K562 (cell line): ENCODE measurements at regions of chr2 and their contacts with region 1.

Region 1: DNA sequence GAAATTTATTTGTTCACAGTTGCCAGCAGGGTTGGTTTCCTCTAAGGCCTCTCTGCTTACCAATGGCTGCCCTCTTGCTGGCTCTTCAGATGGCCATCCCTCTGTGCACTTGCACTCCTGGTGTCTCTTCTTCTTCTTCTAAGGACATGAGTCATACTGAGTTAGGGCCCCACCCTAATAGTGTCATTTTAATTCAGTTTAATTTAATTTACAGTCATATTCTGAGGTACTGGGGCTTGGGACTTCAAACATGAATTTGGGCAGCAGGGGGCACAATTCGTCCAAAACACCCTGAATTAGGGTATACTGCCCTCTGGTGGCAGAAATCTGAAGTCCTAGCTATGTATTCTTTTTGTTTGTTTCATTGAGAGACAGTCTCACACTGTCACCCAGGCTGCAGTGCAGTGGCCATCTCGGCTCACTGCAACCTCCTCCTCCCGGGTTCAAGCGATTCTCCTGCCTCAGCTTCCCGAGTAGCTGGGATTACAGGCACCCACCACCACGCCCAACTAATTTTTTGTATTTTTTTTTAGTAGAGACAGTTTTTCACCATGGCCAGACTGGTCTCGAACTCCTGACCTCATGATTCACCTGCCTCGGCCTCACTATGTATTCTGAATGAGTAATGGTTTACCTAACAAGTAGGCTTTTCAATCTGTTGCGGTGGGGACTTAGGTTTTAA is 19.8 kb downstream of the SLC4A1AP start:
- DNase-seq: peak; percentile 74 to 94 (median 78)
- ATAC-seq: peak; percentile 95
- H3K4me3 ChIP-seq: no peak overlapping the region
- H3K27ac ChIP-seq: no peak overlapping the region; the same call in 2 of the 3 replicates
- H3K4me1 ChIP-seq: peaks cover 0 to 2% of the 10 kb centered on the region in 2 experiments; a peak in 1 of 5 replicates
- H3K27me3 ChIP-seq: no peaks in the 10 kb centered on the region
- CTCF ChIP-seq: peak; percentile 97 to 100 (median 99)
- EP300 ChIP-seq: no peak
- POLR2A ChIP-seq: no peak
- RAD21 ChIP-seq: peak; percentile 81 to 94

Region 2: GRCh38 chr2:27303093-27304025 is 380.2 kb before region 1 on chr2:
- CTCF ChIA-PET with region 1: no interaction called
- POLR2A ChIA-PET with region 1: no interaction called
- in situ Hi-C with region 1: no loop called
- intact Hi-C with region 1: loop called (anchors 5 kb)
- DNase-seq: peak; percentile 69 to 82 (median 75)
- ATAC-seq: peak; percentile 87
- H3K4me3 ChIP-seq: peak overlapping the region; percentile 26
- H3K27ac ChIP-seq: no peak overlapping the region
- H3K4me1 ChIP-seq: peaks cover 0 to 10% of the 10 kb centered on the region in 2 experiments; a peak in 3 of 5 replicates
- H3K27me3 ChIP-seq: no peaks in the 10 kb centered on the region
- CTCF ChIP-seq: peak; percentile 80 to 93 (median 85)
- EP300 ChIP-seq: no peak
- POLR2A ChIP-seq: no peak
- RAD21 ChIP-seq: peak; percentile 80 to 85

Region 3: GRCh38 chr2:27409321-27410073 is 274.0 kb before region 1 on chr2 and contains the start of gene PPM1G:
- CTCF ChIA-PET with region 1: interaction called, 35 read pairs
- POLR2A ChIA-PET with region 1: interaction called, 4 read pairs
- in situ Hi-C with region 1: no loop called
- intact Hi-C with region 1: loop called (anchors 1 kb)
- DNase-seq: peak; percentile 93 to 97 (median 94)
- ATAC-seq: peak; percentile 98
- H3K4me3 ChIP-seq: peak within 1 kb of the TSS; percentile 99
- H3K27ac ChIP-seq: peak within 1 kb of the TSS; percentile 93
- H3K4me1 ChIP-seq: peaks cover 6 to 26% of the 10 kb centered on the region in 2 experiments; a peak in 4 of 5 replicates
- H3K27me3 ChIP-seq: no peaks in the 10 kb centered on the region
- CTCF ChIP-seq: 0 out of 6 replicates have a peak, but pooled peaks of 1 of the 3 experiments have one; percentile 7
- EP300 ChIP-seq: peak; percentile 40
- POLR2A ChIP-seq: peak; percentile 95
- RAD21 ChIP-seq: no peak
- polyA plus RNA-seq, gene PPM1G: 61.7 to 88.8 TPM

Region 4: GRCh38 chr2:27441958-27442919 is 241.3 kb before region 1 on chr2 and contains the start of gene KRTCAP3:
- CTCF ChIA-PET with region 1: no interaction called
- POLR2A ChIA-PET with region 1: no interaction called
- in situ Hi-C with region 1: no loop called
- intact Hi-C with region 1: no loop called
- DNase-seq: peak in 3 of 4 experiments; percentile 41 to 78 (median 73)
- ATAC-seq: peak; percentile 36
- H3K4me3 ChIP-seq: no peak within 1 kb of the TSS
- H3K27ac ChIP-seq: peak within 1 kb of the TSS; percentile 68
- H3K4me1 ChIP-seq: peaks cover 12 to 24% of the 10 kb centered on the region in 2 experiments; a peak in 4 of 5 replicates
- H3K27me3 ChIP-seq: no peaks in the 10 kb centered on the region
- CTCF ChIP-seq: no peak
- EP300 ChIP-seq: no peak
- POLR2A ChIP-seq: no peak; the same call in 1 of the 2 replicates
- RAD21 ChIP-seq: no peak
- polyA plus RNA-seq, gene KRTCAP3: 0.24 to 0.27 TPM

Region 5: DNA sequence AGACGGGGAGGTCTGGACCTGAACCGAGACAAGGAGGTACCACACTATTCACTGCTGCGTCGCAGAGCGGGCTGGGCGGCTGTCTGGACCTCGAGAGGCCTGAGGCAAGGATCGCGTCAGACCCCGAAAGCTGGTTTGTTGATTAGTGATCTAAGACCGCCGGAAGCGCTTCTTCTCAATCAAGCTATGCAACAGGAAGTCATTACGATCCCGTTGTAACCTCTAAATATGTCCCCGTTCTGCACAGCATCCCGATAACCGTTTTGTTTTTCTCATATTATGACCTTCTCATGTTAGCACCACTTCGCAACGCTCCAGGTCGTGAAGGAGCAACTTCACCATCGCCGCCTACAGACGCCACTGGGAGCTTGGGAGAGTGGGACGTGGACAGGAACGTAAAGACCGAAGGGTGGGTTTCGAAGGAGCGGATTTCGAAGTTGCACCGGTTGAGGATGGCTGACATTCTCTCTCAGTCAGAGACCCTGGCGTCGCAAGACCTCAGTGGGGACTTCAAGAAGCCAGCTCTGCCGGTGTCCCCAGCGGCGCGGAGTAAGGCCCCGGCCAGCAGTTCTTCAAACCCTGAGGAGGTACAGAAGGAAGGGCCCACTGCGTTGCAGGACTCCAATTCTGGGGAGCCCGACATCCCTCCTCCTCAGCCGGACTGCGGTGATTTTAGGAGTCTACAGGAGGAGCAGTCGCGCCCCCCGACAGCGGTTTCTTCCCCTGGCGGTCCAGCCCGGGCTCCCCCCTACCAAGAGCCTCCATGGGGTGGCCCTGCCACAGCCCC is 19.9 kb before region 1 on chr2 and contains the starts of genes SLC4A1AP and SUPT7L:
- CTCF ChIA-PET with region 1: no interaction called
- POLR2A ChIA-PET with region 1: interaction called, 13 read pairs
- in situ Hi-C with region 1: no loop called
- intact Hi-C with region 1: no loop called
- DNase-seq: peak; percentile 61 to 89 (median 66)
- ATAC-seq: peak; percentile 82
- H3K4me3 ChIP-seq: peak within 1 kb of the TSS; percentile 98
- H3K27ac ChIP-seq: peak within 1 kb of the TSS; percentile 95
- H3K4me1 ChIP-seq: peaks cover 10 to 20% of the 10 kb centered on the region in 2 experiments; a peak in 4 of 5 replicates
- H3K27me3 ChIP-seq: no peaks in the 10 kb centered on the region
- CTCF ChIP-seq: peak in 2 of 3 experiments; percentile 8 to 20; a peak in 1 of 6 replicates
- EP300 ChIP-seq: no peak
- POLR2A ChIP-seq: peak; percentile 88
- RAD21 ChIP-seq: no peak
- polyA plus RNA-seq, gene SLC4A1AP: 8.1 to 13.3 TPM
- polyA plus RNA-seq, gene SUPT7L: 25.1 to 40.1 TPM

Region 6: GRCh38 chr2:27792759-27793158 is 109.2 kb after region 1 on chr2:
- CTCF ChIA-PET with region 1: no interaction called
- POLR2A ChIA-PET with region 1: no interaction called
- in situ Hi-C with region 1: no loop called
- intact Hi-C with region 1: no loop called
- DNase-seq: no peak
- ATAC-seq: no peak
- H3K4me3 ChIP-seq: no peak overlapping the region
- H3K27ac ChIP-seq: no peak overlapping the region
- H3K4me1 ChIP-seq: no peaks in the 10 kb centered on the region
- H3K27me3 ChIP-seq: peaks cover 8 to 13% of the 10 kb centered on the region in 2 experiments; a peak in 4 of 5 replicates
- CTCF ChIP-seq: no peak
- EP300 ChIP-seq: no peak
- POLR2A ChIP-seq: no peak
- RAD21 ChIP-seq: no peak